ENCODE measurements at regions of chr22 and their contacts with region 1.

Region 1: GRCh38 chr22:36856121-36856791 is 4.5 kb upstream of the NCF4 start:
- DNase-seq: peak; percentile 97
- ATAC-seq: peak; percentile 89

Region 2: DNA sequence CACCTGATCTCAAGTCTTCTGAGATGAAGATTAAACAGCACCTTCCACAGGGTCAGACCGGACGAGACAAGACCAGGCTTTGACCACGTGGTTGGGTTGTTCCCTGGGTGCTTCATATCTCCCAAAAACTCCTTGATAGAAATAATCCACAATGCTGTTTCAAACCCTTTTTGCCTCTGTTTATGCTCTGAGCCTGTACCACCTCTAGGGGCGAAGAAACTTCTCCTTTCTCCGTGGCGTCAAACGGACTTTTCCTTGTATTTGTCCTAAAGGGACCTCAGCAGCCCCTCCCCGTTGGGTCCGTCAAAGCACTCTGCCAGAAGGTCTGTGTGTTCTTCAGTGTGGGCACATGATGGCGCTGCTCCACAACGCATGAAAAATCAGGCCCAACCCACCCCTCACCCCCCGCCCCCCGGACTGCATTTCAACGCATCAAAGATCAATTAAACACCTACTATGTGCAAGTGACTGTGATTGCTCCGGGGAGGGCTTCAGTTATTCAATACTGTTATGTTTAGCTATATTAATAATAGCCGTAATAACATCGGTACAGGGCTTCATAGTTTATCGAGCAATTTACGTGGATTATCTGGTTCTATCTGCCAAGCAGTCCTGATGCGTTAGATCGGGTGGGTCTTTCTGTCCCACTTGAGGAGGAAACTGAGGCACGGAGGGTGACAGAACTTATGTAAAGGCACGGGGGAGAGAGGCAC is 310.0 kb before region 1 on chr22:
- intact Hi-C with region 1: loop called (anchors 1 kb)
- DNase-seq: no peak
- ATAC-seq: peak; percentile 56

Region 3: GRCh38 chr22:36781656-36782627 is 74.3 kb before region 1 on chr22:
- intact Hi-C with region 1: loop called (anchors 5 kb)
- DNase-seq: peak; percentile 87
- ATAC-seq: peak; percentile 85

Region 4: GRCh38 chr22:36977947-36978660 is 121.8 kb after region 1 on chr22:
- intact Hi-C with region 1: loop called (anchors 5 kb)
- DNase-seq: peak; percentile 96
- ATAC-seq: peak; percentile 95

Region 5: DNA sequence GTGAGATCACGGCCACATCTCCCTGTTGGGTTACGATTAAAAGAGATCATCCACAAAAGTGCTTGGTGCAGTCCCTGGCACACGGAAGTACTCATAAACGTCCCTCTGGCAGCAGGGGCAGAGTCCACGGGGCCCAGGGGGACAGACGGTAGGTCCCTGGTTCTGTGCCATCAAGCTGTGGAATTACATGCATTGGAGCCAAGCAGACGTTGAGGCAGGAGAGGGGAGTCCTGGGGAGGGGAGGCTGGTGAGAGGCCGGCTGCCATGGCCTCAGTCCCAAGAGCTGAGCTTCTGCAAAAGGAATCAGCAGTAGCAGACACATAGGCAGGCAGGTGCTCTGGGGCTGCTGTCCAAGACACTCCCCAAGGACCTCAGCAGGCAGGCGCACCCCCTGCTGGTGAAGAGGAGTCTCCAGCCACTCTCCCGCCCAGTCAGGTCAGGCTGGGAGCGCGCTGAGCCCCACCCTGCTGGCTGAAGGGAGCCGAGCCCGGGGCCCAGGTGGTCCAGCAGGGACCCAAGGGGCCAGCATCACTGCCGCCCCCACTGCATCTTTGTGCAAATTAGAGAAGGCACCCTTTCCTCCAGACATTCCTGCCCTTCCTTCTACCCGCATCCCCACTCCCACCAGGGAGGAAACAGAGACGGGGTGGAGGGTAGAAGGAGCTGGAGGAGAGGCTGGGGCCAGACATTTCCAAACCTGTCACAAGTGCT is 187.7 kb after region 1 on chr22:
- intact Hi-C with region 1: loop called (anchors 10 kb)
- DNase-seq: peak; percentile 83
- ATAC-seq: peak; percentile 82

Measured in Right ventricle myocardium inferior (tissue), 1 donor.